IMR-90 (cell line): ENCODE measurements at regions of chr15 and their contacts with region 1.

Region 1: GRCh38 chr15:77118882-77119321 is 48.0 kb upstream of the TSPAN3 start:
- DNase-seq: peak; percentile 80
- ATAC-seq: peak; percentile 89
- H3K4me3 ChIP-seq: no peak overlapping the region
- H3K27ac ChIP-seq: peak overlapping the region; percentile 59; the same call in 1 of the 2 replicates
- H3K4me1 ChIP-seq: peaks cover 8% of the 10 kb centered on the region
- H3K27me3 ChIP-seq: no peaks in the 10 kb centered on the region
- CTCF ChIP-seq: peak; percentile 95
- POLR2A ChIP-seq: no peak
- RAD21 ChIP-seq: peak; percentile 92

Region 2: GRCh38 chr15:77013776-77014131 is 105.1 kb before region 1 on chr15:
- CTCF ChIA-PET with region 1: no interaction called
- POLR2A ChIA-PET with region 1: no interaction called
- dilution Hi-C with region 1: no loop called
- in situ Hi-C with region 1: no loop called
- intact Hi-C with region 1: no loop called
- DNase-seq: no peak
- ATAC-seq: no peak
- H3K4me3 ChIP-seq: no peak overlapping the region
- H3K27ac ChIP-seq: no peak overlapping the region
- H3K4me1 ChIP-seq: no peaks in the 10 kb centered on the region
- H3K27me3 ChIP-seq: peaks cover 28% of the 10 kb centered on the region
- CTCF ChIP-seq: no peak
- POLR2A ChIP-seq: no peak
- RAD21 ChIP-seq: no peak

Region 3: GRCh38 chr15:77186594-77187011 is 67.7 kb after region 1 on chr15:
- CTCF ChIA-PET with region 1: interaction called, 4 read pairs
- POLR2A ChIA-PET with region 1: no interaction called
- dilution Hi-C with region 1: no loop called
- in situ Hi-C with region 1: no loop called
- intact Hi-C with region 1: loop called (anchors 5 kb)
- DNase-seq: peak; percentile 47
- ATAC-seq: peak; percentile 55; the same call in 1 of the 2 replicates
- H3K4me3 ChIP-seq: no peak overlapping the region
- H3K27ac ChIP-seq: no peak overlapping the region
- H3K4me1 ChIP-seq: peaks cover 3% of the 10 kb centered on the region
- H3K27me3 ChIP-seq: no peaks in the 10 kb centered on the region
- CTCF ChIP-seq: peak; percentile 62
- POLR2A ChIP-seq: no peak
- RAD21 ChIP-seq: peak; percentile 66

Region 4: GRCh38 chr15:77342807-77343206 is 223.9 kb after region 1 on chr15:
- CTCF ChIA-PET with region 1: no interaction called
- POLR2A ChIA-PET with region 1: no interaction called
- dilution Hi-C with region 1: no loop called
- in situ Hi-C with region 1: no loop called
- intact Hi-C with region 1: loop called (anchors 2 kb)
- DNase-seq: no peak
- ATAC-seq: no peak
- H3K4me3 ChIP-seq: no peak overlapping the region
- H3K27ac ChIP-seq: no peak overlapping the region
- H3K4me1 ChIP-seq: no peaks in the 10 kb centered on the region; the same call in 1 of the 2 replicates
- H3K27me3 ChIP-seq: no peaks in the 10 kb centered on the region
- CTCF ChIP-seq: no peak
- POLR2A ChIP-seq: no peak
- RAD21 ChIP-seq: no peak

Region 5: GRCh38 chr15:77402740-77403379 is 284.0 kb after region 1 on chr15:
- CTCF ChIA-PET with region 1: no interaction called
- POLR2A ChIA-PET with region 1: no interaction called
- dilution Hi-C with region 1: no loop called
- in situ Hi-C with region 1: no loop called
- intact Hi-C with region 1: no loop called
- DNase-seq: peak; percentile 90
- ATAC-seq: peak; percentile 86
- H3K4me3 ChIP-seq: no peak overlapping the region
- H3K27ac ChIP-seq: peak overlapping the region; percentile 72; the same call in 1 of the 2 replicates
- H3K4me1 ChIP-seq: no peaks in the 10 kb centered on the region; the same call in 1 of the 2 replicates
- H3K27me3 ChIP-seq: no peaks in the 10 kb centered on the region
- CTCF ChIP-seq: no peak
- POLR2A ChIP-seq: no peak
- RAD21 ChIP-seq: no peak

Region 6: GRCh38 chr15:77482570-77482969 is 363.7 kb after region 1 on chr15:
- CTCF ChIA-PET with region 1: interaction called, 3 read pairs
- POLR2A ChIA-PET with region 1: no interaction called
- dilution Hi-C with region 1: no loop called
- in situ Hi-C with region 1: no loop called
- intact Hi-C with region 1: loop called (anchors 5 kb)
- DNase-seq: peak; percentile 86
- ATAC-seq: peak; percentile 82
- H3K4me3 ChIP-seq: no peak overlapping the region
- H3K27ac ChIP-seq: no peak overlapping the region; the same call in 1 of the 2 replicates
- H3K4me1 ChIP-seq: peaks cover 25% of the 10 kb centered on the region
- H3K27me3 ChIP-seq: no peaks in the 10 kb centered on the region
- CTCF ChIP-seq: no peak
- POLR2A ChIP-seq: no peak
- RAD21 ChIP-seq: no peak

Region 7: DNA sequence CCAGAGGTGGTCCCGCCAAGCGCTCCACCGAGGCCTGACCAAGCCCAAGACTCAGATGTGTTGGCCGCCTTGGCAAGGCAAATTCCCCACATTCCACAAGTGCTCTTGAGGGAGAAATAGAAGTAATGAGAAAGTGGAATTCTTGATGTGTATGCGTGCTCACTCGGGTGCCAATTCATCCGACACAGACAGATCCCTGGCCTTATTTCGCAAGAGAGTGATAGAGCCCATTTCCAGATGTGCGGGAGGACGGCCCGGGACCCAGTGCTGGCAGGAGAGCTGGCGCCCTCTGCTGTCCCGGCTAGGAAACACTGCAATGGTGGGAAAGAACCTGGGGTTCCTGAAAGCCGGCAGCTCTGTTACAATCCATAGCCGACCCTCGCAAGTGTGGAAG is 377.8 kb after region 1 on chr15:
- CTCF ChIA-PET with region 1: interaction called, 12 read pairs
- POLR2A ChIA-PET with region 1: no interaction called
- dilution Hi-C with region 1: no loop called
- in situ Hi-C with region 1: loop called (anchors 10 kb)
- intact Hi-C with region 1: loop called (anchors 1 kb)
- DNase-seq: peak; percentile 97
- ATAC-seq: peak; percentile 82
- H3K4me3 ChIP-seq: no peak overlapping the region
- H3K27ac ChIP-seq: peak overlapping the region; percentile 68
- H3K4me1 ChIP-seq: peaks cover 28% of the 10 kb centered on the region
- H3K27me3 ChIP-seq: no peaks in the 10 kb centered on the region
- CTCF ChIP-seq: peak; percentile 95
- POLR2A ChIP-seq: 0 out of 2 replicates have a peak, but pooled peaks have one; percentile 37
- RAD21 ChIP-seq: peak; percentile 99

Region 8: DNA sequence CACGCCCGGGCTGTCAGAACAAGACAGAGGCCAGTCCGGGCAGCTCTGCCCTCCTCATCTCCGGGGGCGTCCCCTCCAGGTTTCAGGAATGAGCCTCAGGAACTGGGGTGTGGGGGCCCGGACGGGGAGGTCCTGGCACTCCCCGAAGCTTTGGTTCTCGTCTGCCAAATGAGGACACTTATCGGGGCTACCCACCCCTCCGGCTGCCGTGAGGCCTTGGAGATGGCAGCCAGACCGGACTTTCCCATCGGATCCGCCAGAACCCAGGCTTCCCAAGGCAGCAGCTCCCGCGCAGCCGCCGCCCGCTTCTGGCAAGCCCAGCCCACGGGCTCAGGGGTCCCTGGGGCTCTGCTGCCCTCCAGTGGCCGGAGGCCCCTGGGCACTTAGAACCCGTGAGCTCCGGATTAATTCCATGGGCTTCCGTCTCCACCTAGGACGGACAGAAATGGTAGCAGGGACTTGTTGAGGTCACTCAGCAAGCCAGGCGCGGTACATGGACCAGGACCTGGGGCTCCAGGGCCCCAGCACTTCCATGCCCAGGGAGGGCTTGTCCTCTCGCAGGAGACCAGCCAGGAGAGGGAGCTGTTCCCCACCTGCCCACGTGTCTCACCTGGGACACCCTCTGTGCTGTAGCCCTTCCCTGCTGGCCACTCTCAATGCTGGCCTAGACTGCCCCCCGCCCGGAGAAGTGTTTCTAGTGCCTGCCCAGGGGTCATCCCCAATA is 424.4 kb after region 1 on chr15:
- CTCF ChIA-PET with region 1: interaction called, 33 read pairs
- POLR2A ChIA-PET with region 1: no interaction called
- dilution Hi-C with region 1: no loop called
- in situ Hi-C with region 1: loop called (anchors 5 kb)
- intact Hi-C with region 1: loop called (anchors 1 kb)
- DNase-seq: peak; percentile 78
- ATAC-seq: peak; percentile 89
- H3K4me3 ChIP-seq: peak overlapping the region; percentile 11; the same call in 1 of the 2 replicates
- H3K27ac ChIP-seq: peak overlapping the region; percentile 25; the same call in 1 of the 2 replicates
- H3K4me1 ChIP-seq: peaks cover 18% of the 10 kb centered on the region
- H3K27me3 ChIP-seq: no peaks in the 10 kb centered on the region
- CTCF ChIP-seq: peak; percentile 99
- POLR2A ChIP-seq: no peak
- RAD21 ChIP-seq: peak; percentile 99

Region 9: GRCh38 chr15:77633134-77633912 is 514.4 kb after region 1 on chr15:
- CTCF ChIA-PET with region 1: no interaction called
- POLR2A ChIA-PET with region 1: no interaction called
- dilution Hi-C with region 1: no loop called
- in situ Hi-C with region 1: no loop called
- intact Hi-C with region 1: loop called (anchors 5 kb)
- DNase-seq: peak; percentile 70
- ATAC-seq: peak; percentile 99
- H3K4me3 ChIP-seq: peak overlapping the region; percentile 34
- H3K27ac ChIP-seq: no peak overlapping the region
- H3K4me1 ChIP-seq: peaks cover 3% of the 10 kb centered on the region; the same call in 1 of the 2 replicates
- H3K27me3 ChIP-seq: peaks cover 85% of the 10 kb centered on the region
- CTCF ChIP-seq: peak; percentile 100
- POLR2A ChIP-seq: no peak
- RAD21 ChIP-seq: peak; percentile 71